B cell (primary cell): ENCODE measurements at regions of chr19 and their contacts with region 1.

Region 1: GRCh38 chr19:38618590-38619360 is at the start of gene EIF3K:
- DNase-seq: peak; percentile 99
- ATAC-seq: peak; percentile 40
- H3K4me3 ChIP-seq: peak within 1 kb of the TSS; percentile 54 to 95 (median 79)
- H3K4me3 Mint-ChIP-seq: peak within 1 kb of the TSS; percentile 100
- H3K27ac ChIP-seq: peak within 1 kb of the TSS; percentile 88 to 93
- H3K27ac Mint-ChIP-seq: peak within 1 kb of the TSS; percentile 98
- H3K4me1 ChIP-seq: peaks cover 33 to 50% of the 10 kb centered on the region in 2 donors
- H3K4me1 Mint-ChIP-seq: peaks cover 47% of the 10 kb centered on the region
- H3K27me3 ChIP-seq: no peaks in the 10 kb centered on the region
- H3K27me3 Mint-ChIP-seq: no peaks in the 10 kb centered on the region
- CTCF ChIP-seq: no peak
- total RNA-seq, gene EIF3K: 284 and 295 TPM in 2 replicates

Region 2: DNA sequence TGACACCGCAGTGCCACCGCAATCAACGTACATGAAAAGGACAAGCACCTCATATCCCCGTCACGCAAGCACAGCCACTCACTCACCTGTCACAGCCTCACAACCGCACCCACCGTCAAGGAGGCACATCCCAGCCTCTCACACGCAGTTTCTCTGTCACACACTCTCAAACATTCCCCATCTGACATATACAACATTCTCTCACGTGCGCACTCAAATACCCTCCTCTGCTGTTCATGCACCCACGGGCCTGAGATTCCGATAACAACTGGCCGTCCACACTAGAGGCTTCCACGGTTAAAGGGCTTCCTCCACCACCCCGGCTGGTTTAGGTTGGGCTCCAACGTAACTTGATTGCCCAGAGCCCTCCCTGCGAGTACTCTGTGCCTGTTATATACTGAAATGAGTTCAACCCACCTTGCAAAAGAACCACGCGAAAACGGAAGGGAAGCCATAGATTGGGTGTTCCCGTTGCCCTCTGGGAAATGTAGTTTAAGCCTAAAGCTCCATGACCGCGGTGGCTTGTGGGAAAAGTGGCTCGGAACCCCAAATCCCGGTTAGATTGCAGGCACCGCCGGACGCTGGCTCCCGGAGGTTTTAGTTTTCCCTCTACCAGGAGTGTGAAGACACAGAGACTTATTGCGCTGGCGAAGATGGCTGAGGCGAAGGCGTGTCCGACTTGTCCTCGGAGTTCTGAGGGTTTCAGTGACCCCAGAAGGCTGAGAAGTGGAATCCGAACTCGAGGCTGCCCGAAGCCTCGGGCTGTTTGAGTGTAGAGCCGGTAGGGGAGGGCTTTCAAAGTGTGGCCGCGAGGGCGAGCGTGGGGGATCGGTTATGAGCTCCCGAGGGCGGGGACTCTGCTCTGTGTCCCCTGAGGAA is 839.4 kb before region 1 on chr19 and contains the start of gene ZNF573:
- CTCF ChIA-PET with region 1: no interaction called
- POLR2A ChIA-PET with region 1: no interaction called
- intact Hi-C with region 1: loop called (anchors 2 kb)
- DNase-seq: peak; percentile 91
- ATAC-seq: peak; percentile 84
- H3K4me3 ChIP-seq: peak within 1 kb of the TSS; percentile 71 to 81 (median 74)
- H3K4me3 Mint-ChIP-seq: peak within 1 kb of the TSS; percentile 96
- H3K27ac ChIP-seq: peak within 1 kb of the TSS; percentile 86 to 93
- H3K27ac Mint-ChIP-seq: peak within 1 kb of the TSS; percentile 97
- H3K4me1 ChIP-seq: peaks cover 7 to 11% of the 10 kb centered on the region in 2 donors
- H3K4me1 Mint-ChIP-seq: peaks cover 39% of the 10 kb centered on the region
- H3K27me3 ChIP-seq: no peaks in the 10 kb centered on the region
- H3K27me3 Mint-ChIP-seq: no peaks in the 10 kb centered on the region
- CTCF ChIP-seq: peak; percentile 18
- total RNA-seq, gene ZNF573: 28.8 and 31.1 TPM in 2 replicates

Region 3: GRCh38 chr19:38374429-38375176 is 244.2 kb before region 1 on chr19 and contains the start of gene PSMD8:
- CTCF ChIA-PET with region 1: interaction called, 3 read pairs
- POLR2A ChIA-PET with region 1: interaction called, 4 read pairs
- intact Hi-C with region 1: loop called (anchors 1 kb)
- DNase-seq: peak; percentile 100
- ATAC-seq: peak; percentile 97
- H3K4me3 ChIP-seq: peak within 1 kb of the TSS; percentile 69 to 92 (median 80)
- H3K4me3 Mint-ChIP-seq: peak within 1 kb of the TSS; percentile 93
- H3K27ac ChIP-seq: peak within 1 kb of the TSS; percentile 88 to 90
- H3K27ac Mint-ChIP-seq: peak within 1 kb of the TSS; percentile 96
- H3K4me1 ChIP-seq: peaks cover 17 to 26% of the 10 kb centered on the region in 2 donors
- H3K4me1 Mint-ChIP-seq: peaks cover 26% of the 10 kb centered on the region
- H3K27me3 ChIP-seq: peaks cover 0 to 12% (median 0%) of the 10 kb centered on the region in 4 experiments
- H3K27me3 Mint-ChIP-seq: peaks cover 6% of the 10 kb centered on the region
- CTCF ChIP-seq: peak; percentile 18
- total RNA-seq, gene PSMD8: 77.1 and 88.1 TPM in 2 replicates

Region 4: GRCh38 chr19:38544034-38544958 is 74.5 kb before region 1 on chr19:
- CTCF ChIA-PET with region 1: interaction called, 15 read pairs
- POLR2A ChIA-PET with region 1: interaction called, 3 read pairs
- intact Hi-C with region 1: loop called (anchors 1 kb)
- DNase-seq: peak; percentile 78
- ATAC-seq: peak; percentile 81
- H3K4me3 ChIP-seq: peak overlapping the region in 1 of 5 experiments; percentile 38
- H3K4me3 Mint-ChIP-seq: no peak overlapping the region
- H3K27ac ChIP-seq: no peak overlapping the region
- H3K27ac Mint-ChIP-seq: peak overlapping the region; percentile 27
- H3K4me1 ChIP-seq: peaks cover 14 to 27% of the 10 kb centered on the region in 2 donors
- H3K4me1 Mint-ChIP-seq: peaks cover 21% of the 10 kb centered on the region
- H3K27me3 ChIP-seq: peaks cover 0 to 4% (median 0%) of the 10 kb centered on the region in 4 experiments
- H3K27me3 Mint-ChIP-seq: no peaks in the 10 kb centered on the region
- CTCF ChIP-seq: peak; percentile 76

Region 5: GRCh38 chr19:38647368-38647965 is 28.7 kb after region 1 on chr19 and contains the start of gene ACTN4:
- CTCF ChIA-PET with region 1: interaction called, 8 read pairs
- POLR2A ChIA-PET with region 1: interaction called, 14 read pairs
- intact Hi-C with region 1: loop called (anchors 1 kb)
- DNase-seq: peak; percentile 100
- ATAC-seq: peak; percentile 94
- H3K4me3 ChIP-seq: peak within 1 kb of the TSS; percentile 82 to 96 (median 91)
- H3K4me3 Mint-ChIP-seq: peak within 1 kb of the TSS; percentile 90
- H3K27ac ChIP-seq: peak within 1 kb of the TSS; percentile 40 to 68
- H3K27ac Mint-ChIP-seq: peak within 1 kb of the TSS; percentile 93
- H3K4me1 ChIP-seq: peaks cover 21 to 31% of the 10 kb centered on the region in 2 donors
- H3K4me1 Mint-ChIP-seq: peaks cover 37% of the 10 kb centered on the region
- H3K27me3 ChIP-seq: no peaks in the 10 kb centered on the region
- H3K27me3 Mint-ChIP-seq: no peaks in the 10 kb centered on the region
- CTCF ChIP-seq: no peak
- total RNA-seq, gene ACTN4: 154 and 164 TPM in 2 replicates

Region 6: GRCh38 chr19:38831142-38831605 is 212.4 kb after region 1 on chr19:
- CTCF ChIA-PET with region 1: no interaction called
- POLR2A ChIA-PET with region 1: no interaction called
- intact Hi-C with region 1: loop called (anchors 1 kb)
- DNase-seq: no peak
- ATAC-seq: peak; percentile 12
- H3K4me3 ChIP-seq: peak overlapping the region; percentile 62 to 100 (median 69)
- H3K4me3 Mint-ChIP-seq: peak overlapping the region; percentile 96
- H3K27ac ChIP-seq: peak overlapping the region; percentile 30 to 83
- H3K27ac Mint-ChIP-seq: peak overlapping the region; percentile 94
- H3K4me1 ChIP-seq: peaks cover 10 to 18% of the 10 kb centered on the region in 2 donors
- H3K4me1 Mint-ChIP-seq: peaks cover 25% of the 10 kb centered on the region
- H3K27me3 ChIP-seq: no peaks in the 10 kb centered on the region
- H3K27me3 Mint-ChIP-seq: no peaks in the 10 kb centered on the region
- CTCF ChIP-seq: no peak

Region 7: DNA sequence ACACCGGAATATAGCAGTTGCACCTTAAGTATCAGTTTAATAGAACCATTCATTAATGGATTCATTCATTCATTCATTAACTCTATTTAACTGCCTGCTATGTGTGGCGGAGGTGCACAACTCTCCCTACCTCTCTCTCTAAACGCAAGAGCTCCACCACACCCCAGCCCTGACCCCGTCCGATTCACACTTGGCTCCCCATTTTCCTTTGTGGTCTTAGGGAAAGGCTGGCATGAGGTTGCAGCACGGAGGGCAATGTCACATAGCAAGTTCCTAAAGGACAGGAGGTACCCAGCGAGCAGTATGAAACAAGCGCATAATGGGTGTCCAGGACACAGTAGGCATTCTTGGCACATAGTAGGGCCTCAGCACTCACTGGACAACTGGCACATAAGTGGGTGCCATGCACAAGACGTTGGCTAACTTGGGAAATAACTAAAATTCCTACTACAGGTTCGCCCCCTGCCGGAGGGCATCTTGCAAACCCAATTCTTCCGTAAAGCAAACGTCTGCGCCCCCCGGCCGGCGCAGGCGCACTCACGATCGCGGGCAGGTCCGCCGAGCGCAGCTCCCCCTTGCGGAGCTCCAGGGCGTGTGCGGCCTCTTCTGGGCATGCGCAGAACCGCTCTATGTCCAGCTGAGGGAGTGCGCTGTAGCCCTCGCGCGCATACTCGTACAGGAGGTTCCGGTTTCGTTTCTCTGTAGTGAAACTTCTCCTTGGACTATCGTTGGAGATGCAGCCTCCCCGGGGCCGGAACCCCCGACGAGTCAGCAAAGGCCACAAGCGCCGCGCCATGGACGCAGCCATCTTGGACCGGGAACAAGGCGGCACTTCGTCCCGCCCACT is 311.4 kb after region 1 on chr19 and contains the start of gene SARS2:
- CTCF ChIA-PET with region 1: interaction called, 14 read pairs
- POLR2A ChIA-PET with region 1: interaction called, 5 read pairs
- intact Hi-C with region 1: loop called (anchors 1 kb)
- DNase-seq: no peak
- ATAC-seq: peak; percentile 69
- H3K4me3 ChIP-seq: peak within 1 kb of the TSS; percentile 79 to 93 (median 91)
- H3K4me3 Mint-ChIP-seq: peak within 1 kb of the TSS; percentile 99
- H3K27ac ChIP-seq: peak within 1 kb of the TSS; percentile 84 to 91
- H3K27ac Mint-ChIP-seq: peak within 1 kb of the TSS; percentile 99
- H3K4me1 ChIP-seq: peaks cover 19 to 28% of the 10 kb centered on the region in 2 donors
- H3K4me1 Mint-ChIP-seq: peaks cover 26% of the 10 kb centered on the region
- H3K27me3 ChIP-seq: no peaks in the 10 kb centered on the region
- H3K27me3 Mint-ChIP-seq: no peaks in the 10 kb centered on the region
- CTCF ChIP-seq: peak; percentile 100
- total RNA-seq, gene SARS2: 32.0 and 38.1 TPM in 2 replicates